A673 (cell line): ENCODE measurements at regions of chr16 and their contacts with region 1.

Region 1: DNA sequence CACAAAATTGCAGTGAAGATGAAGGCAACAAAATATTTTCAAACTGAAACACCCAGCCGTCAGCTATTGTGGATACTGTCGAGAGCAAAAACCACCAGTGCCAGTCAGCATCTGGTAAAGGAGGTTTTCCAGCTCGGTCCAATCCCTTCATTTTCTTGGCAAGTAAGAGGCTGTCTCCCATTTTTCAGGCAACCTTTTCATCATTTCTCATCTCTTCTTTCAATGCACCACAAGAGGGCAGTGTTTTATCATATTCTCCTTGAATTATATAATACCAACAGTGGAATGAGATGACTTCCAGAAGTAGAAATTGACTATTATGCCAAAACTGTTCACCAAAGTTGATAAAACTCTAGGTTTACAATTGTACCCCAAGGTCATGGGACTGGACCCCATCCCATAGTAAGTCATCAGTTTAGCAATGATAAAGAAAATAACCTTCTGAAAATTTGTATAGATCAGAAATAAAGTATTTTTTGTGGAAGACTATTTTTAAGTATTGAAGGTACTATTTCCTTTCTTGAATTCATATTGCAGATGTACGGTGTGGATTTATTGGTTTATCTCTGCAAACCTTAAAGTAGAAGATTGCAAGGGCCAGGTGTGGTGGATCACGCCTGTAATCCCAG is 16.8 kb downstream of the NQO1 start:
- DNase-seq: peak; percentile 81
- H3K4me3 ChIP-seq: no peak overlapping the region
- H3K27ac ChIP-seq: no peak overlapping the region
- H3K4me1 ChIP-seq: no peaks in the 10 kb centered on the region
- H3K27me3 ChIP-seq: no peaks in the 10 kb centered on the region
- CTCF ChIP-seq: peak; percentile 73

Region 2: GRCh38 chr16:69651217-69651616 is 58.4 kb before region 1 on chr16:
- CTCF ChIA-PET with region 1: no interaction called
- POLR2A ChIA-PET with region 1: no interaction called
- intact Hi-C with region 1: no loop called
- DNase-seq: no peak
- H3K4me3 ChIP-seq: no peak overlapping the region
- H3K27ac ChIP-seq: no peak overlapping the region
- H3K4me1 ChIP-seq: no peaks in the 10 kb centered on the region
- H3K27me3 ChIP-seq: no peaks in the 10 kb centered on the region
- CTCF ChIP-seq: no peak

Region 3: DNA sequence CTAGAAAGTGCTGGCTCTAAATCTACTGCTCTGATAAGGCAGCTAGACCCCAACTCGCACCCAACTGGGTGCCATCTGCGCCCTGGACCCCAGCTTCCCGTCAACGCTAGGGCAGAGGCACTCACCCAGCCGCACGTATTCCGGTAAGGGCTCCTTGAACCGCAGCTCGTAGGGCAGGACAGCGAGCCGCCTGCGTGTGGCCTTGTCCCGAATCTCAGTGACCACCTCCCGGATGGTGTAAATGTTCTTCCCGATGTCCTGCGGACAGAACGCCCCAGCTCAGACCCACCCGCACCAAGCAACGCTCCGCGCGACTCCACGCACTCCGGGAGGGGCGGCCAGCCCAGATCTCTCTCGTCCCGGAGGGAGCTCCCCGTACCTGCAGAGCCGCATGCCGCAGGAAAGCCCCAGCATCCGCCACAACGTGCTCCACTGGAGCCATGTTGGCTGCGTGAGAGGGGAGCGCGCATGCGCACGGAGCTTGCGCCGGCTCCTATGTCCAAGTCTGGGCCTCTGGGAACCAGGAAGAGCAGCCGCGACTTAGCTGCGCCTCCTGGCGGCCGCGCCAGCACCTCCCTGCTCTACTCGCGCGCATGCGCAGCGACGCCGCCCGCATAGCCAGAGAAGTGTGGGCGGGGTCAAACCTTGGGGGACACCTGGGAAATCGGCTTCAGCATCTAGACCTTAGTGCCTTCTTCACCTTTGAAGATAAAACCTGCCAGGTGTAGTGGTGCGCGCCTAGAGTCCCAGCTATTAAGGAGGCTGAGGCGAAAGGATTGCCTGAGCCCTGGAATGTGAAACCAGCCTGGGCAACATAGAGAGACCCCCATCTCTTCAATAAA is 45.1 kb after region 1 on chr16 and contains the start of gene NOB1:
- CTCF ChIA-PET with region 1: interaction called, 3 read pairs
- POLR2A ChIA-PET with region 1: no interaction called
- intact Hi-C with region 1: loop called (anchors 1 kb)
- DNase-seq: peak; percentile 97
- H3K4me3 ChIP-seq: peak within 1 kb of the TSS; percentile 85
- H3K27ac ChIP-seq: peak within 1 kb of the TSS; percentile 79
- H3K4me1 ChIP-seq: peaks cover 7% of the 10 kb centered on the region
- H3K27me3 ChIP-seq: no peaks in the 10 kb centered on the region
- CTCF ChIP-seq: peak; percentile 98
- total RNA-seq, gene NOB1: 78.1 and 93.3 TPM in 2 replicates

Region 4: GRCh38 chr16:69930117-69930776 is 220.7 kb after region 1 on chr16:
- CTCF ChIA-PET with region 1: no interaction called
- POLR2A ChIA-PET with region 1: no interaction called
- intact Hi-C with region 1: loop called (anchors 10 kb)
- DNase-seq: peak; percentile 78
- H3K4me3 ChIP-seq: no peak overlapping the region
- H3K27ac ChIP-seq: no peak overlapping the region
- H3K4me1 ChIP-seq: no peaks in the 10 kb centered on the region
- H3K27me3 ChIP-seq: no peaks in the 10 kb centered on the region
- CTCF ChIP-seq: peak; percentile 77